Activated CD4-positive, alpha-beta memory T cell treated with anti-CD3 and anti-CD28 coated beads for 36 hours (primary cell): ENCODE measurements at regions of chr21 and their contacts with region 1.

Region 1: GRCh38 chr21:28516991-28517592 is 475.6 kb downstream of the LTN1 start:
- DNase-seq: peak; percentile 77
- H3K4me3 Mint-ChIP-seq: no peak overlapping the region
- H3K27ac Mint-ChIP-seq: no peak overlapping the region
- H3K4me1 Mint-ChIP-seq: no peaks in the 10 kb centered on the region
- H3K27me3 Mint-ChIP-seq: peaks cover 1% of the 10 kb centered on the region

Region 2: GRCh38 chr21:26842976-26843932 is 1673.8 kb before region 1 on chr21:
- CTCF ChIA-PET with region 1: interaction called, 3 read pairs
- POLR2A ChIA-PET with region 1: no interaction called
- intact Hi-C with region 1: loop called (anchors 10 kb)
- DNase-seq: peak; percentile 29
- H3K4me3 Mint-ChIP-seq: peak overlapping the region; percentile 49
- H3K27ac Mint-ChIP-seq: no peak overlapping the region
- H3K4me1 Mint-ChIP-seq: peaks cover 28% of the 10 kb centered on the region
- H3K27me3 Mint-ChIP-seq: peaks cover 60% of the 10 kb centered on the region

Region 3: GRCh38 chr21:28387220-28387619 is 129.9 kb before region 1 on chr21:
- CTCF ChIA-PET with region 1: no interaction called
- POLR2A ChIA-PET with region 1: no interaction called
- intact Hi-C with region 1: no loop called
- DNase-seq: no peak
- H3K4me3 Mint-ChIP-seq: no peak overlapping the region
- H3K27ac Mint-ChIP-seq: no peak overlapping the region
- H3K4me1 Mint-ChIP-seq: no peaks in the 10 kb centered on the region
- H3K27me3 Mint-ChIP-seq: no peaks in the 10 kb centered on the region

Region 4: DNA sequence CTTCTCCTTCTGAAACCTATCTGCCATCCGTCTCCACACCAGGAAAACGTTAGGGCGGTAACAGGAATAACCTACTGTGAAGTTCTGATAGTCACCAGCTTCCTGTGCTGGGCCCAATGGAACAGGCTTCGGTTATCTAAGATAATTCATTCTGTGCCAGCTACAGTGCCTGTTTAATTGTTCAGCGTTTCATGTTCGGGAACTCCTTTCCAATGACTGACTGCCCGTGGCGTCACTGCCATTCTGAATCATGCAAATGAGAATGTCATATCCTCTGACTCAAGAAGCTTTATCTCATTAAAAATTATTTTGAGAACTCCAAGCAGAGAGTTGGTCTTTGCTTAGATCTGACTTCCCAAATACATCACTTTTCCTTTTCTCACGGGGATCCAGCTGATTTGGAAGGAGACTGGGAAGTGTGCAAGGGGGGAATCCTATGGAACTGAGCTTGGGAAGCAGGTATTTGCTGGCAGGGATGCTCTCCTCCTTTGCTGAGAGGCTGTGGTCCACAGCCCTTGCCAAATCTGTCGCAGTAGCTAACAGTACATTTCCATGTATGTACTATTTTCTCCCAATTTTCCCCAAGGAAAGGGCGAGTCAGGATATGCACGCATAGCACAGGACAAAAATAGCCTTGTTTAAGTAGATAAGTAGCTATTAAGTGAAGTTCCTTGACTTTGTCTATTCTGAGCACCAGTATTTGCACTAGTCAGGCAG is 116.9 kb after region 1 on chr21:
- CTCF ChIA-PET with region 1: no interaction called
- POLR2A ChIA-PET with region 1: no interaction called
- intact Hi-C with region 1: no loop called
- DNase-seq: peak; percentile 33
- H3K4me3 Mint-ChIP-seq: no peak overlapping the region
- H3K27ac Mint-ChIP-seq: no peak overlapping the region
- H3K4me1 Mint-ChIP-seq: peaks cover 20% of the 10 kb centered on the region
- H3K27me3 Mint-ChIP-seq: no peaks in the 10 kb centered on the region

Region 5: DNA sequence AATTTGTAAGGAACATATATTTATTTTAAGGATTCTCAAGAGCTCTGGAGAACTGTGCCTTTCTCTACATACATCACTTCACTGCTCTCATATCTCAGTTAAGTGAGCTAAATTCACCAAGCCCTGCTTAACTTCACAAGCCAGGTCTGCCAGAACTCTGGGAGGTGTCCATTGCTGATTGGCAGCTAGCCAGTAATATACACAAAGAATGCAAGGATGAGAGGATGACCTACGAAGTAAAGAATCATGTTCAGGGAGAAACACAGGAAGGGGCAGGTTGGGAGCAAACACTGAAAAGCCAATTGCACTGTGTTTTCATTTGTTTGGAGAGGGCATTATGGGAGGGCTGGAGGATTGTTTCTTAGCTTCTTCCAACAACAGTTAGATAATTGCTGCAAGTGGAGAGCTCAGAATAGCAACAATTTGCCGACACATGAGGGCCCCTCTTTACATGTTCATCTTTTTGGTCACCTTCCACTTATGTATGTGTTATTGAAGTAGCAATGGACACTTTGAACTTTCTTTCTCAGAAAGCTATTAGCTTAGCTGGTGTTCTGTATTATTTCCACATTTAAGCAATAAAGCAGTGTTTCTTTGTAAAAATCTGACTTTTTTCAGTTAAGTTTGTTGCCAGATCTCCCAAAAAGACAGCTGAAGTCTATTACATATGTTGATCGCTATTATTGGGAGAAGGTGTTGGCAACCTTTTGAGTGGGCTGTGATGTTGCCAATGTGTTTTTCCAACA is 220.8 kb after region 1 on chr21:
- CTCF ChIA-PET with region 1: interaction called, 248 read pairs
- POLR2A ChIA-PET with region 1: no interaction called
- intact Hi-C with region 1: no loop called
- DNase-seq: no peak
- H3K4me3 Mint-ChIP-seq: no peak overlapping the region
- H3K27ac Mint-ChIP-seq: no peak overlapping the region
- H3K4me1 Mint-ChIP-seq: peaks cover 6% of the 10 kb centered on the region
- H3K27me3 Mint-ChIP-seq: no peaks in the 10 kb centered on the region

Region 6: GRCh38 chr21:28943631-28944030 is 426.5 kb after region 1 on chr21:
- CTCF ChIA-PET with region 1: interaction called, 4 read pairs
- POLR2A ChIA-PET with region 1: no interaction called
- intact Hi-C with region 1: loop called (anchors 1 kb)
- DNase-seq: no peak
- H3K4me3 Mint-ChIP-seq: no peak overlapping the region
- H3K27ac Mint-ChIP-seq: peak overlapping the region; percentile 28
- H3K4me1 Mint-ChIP-seq: peaks cover 7% of the 10 kb centered on the region
- H3K27me3 Mint-ChIP-seq: no peaks in the 10 kb centered on the region